ENCODE measurements at regions of chr17 and their contacts with region 1.

Region 1: GRCh38 chr17:64129764-64130558 is at the start of gene ERN1:
- DNase-seq: peak; percentile 96

Region 2: GRCh38 chr17:64025732-64026294 is 104.1 kb before region 1 on chr17:
- CTCF ChIA-PET with region 1: interaction called, 106 read pairs
- POLR2A ChIA-PET with region 1: interaction called, 6 read pairs
- DNase-seq: peak; percentile 93

Region 3: DNA sequence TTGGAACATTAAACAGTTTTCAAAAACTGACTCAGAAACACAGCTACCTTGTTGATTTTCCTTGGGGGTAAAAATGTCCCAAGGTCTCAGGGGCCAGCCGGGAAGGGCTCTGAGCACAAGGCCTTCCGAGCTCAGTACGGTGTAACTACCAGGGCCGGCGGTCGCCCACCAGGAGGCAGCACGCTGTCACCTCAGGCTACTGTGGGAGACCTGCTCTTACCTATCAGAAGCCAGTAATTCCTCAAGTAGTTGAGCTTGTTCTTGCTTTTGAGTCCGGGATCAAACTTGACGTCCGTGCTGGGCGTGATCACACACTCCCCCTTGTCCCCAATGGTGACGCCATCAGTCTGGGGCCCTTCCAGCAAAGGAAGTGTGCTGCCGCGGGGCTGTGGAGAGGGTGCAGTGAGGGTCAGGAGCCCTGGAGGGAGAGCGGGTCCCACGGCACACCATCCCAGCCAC is 66.2 kb before region 1 on chr17:
- CTCF ChIA-PET with region 1: interaction called, 65 read pairs
- POLR2A ChIA-PET with region 1: interaction called, 12 read pairs
- DNase-seq: peak; percentile 79

Region 4: DNA sequence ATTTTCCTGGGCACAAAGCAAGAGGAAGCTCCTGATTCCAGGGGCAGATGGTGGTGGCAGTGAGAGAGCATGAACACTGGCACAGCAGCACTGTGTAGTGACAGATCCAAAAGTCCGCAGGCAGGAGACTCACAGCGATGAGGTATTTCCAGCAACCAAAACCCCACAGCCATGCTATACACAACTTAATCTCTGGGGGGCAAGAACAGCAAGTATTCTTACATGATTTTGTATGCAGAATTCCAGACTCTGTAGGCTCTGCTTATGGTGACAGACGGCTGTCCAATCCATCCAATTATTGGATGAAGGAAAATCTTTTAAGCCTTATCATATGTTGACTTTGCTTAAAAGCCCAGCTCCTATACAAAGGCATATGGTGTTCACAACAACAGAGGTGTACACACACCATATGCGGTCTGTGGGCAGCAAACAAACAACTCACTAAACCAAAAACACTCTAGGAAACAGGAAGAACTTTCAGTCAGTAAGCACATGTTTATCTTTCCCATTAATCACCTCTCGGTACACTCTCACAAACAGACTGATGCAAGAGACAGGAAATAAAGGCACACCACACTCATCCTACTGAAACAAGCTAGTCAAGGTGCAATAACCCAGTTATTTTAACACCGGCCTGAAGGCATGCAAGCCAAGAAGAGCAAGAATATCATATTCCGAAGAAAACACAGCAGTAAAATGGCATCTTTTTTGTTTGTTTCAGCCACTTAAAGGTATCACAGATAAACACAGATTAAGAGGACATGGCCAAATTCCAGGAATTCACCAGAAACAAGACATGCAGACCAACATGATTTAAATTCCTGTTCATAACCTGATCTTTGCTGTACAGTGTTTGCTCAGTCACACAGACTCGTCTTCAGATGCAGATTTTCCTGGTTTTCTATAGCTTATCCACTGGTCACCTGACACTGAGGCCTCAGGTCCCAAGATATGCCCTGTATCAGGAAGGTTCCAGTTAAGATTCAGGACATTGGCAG is 47.9 kb before region 1 on chr17:
- CTCF ChIA-PET with region 1: interaction called, 6 read pairs
- POLR2A ChIA-PET with region 1: interaction called, 16 read pairs
- DNase-seq: peak; percentile 46

Region 5: DNA sequence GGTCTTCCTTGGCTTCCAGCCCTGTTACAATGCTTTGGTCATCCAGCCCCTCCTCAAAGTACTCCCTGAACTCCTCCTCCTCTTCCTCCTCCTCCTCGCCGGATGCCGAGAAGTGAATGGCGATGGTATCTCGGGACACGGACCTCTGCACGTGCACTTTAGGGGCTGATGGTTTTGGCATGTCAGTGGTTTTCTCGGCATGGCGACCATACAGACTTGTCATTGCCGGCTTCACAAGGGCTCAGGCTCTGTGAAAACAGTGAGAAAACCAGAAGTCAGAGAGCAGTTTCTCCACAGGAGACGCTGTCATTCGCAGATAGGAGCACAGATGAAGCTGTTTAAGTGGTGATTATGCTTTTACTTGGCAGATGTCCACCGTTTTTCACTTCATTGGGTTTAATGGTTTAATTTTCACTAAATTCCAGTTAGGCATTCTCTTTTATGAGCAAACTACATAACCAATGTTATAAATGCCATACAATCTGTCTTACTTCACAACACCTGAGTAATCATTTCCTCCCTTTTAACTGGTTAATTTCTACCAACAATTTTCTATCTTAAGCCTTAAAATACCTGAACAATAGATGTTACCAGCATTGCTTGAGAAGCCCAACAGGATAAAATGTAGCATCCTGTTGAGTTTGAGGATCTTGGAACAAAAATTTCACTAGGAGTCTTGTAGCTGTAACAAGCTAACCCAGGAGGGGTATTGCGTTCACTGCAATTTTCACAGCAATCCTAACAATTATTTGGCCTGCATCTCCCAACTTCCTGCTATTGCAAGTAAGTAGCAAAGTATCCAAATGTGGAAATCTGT is 84.2 kb after region 1 on chr17:
- CTCF ChIA-PET with region 1: no interaction called
- POLR2A ChIA-PET with region 1: no interaction called
- DNase-seq: peak; percentile 45

Region 6: GRCh38 chr17:64315032-64315490 is 185.1 kb after region 1 on chr17:
- CTCF ChIA-PET with region 1: no interaction called
- POLR2A ChIA-PET with region 1: no interaction called
- DNase-seq: no peak